Heart right ventricle (tissue), 16 donors: ENCODE measurements at regions of chr3 and their contacts with region 1.

Region 1: GRCh38 chr3:23999012-23999641 is 54.0 kb downstream of the NR1D2 start:
- DNase-seq: peak; percentile 53 to 66
- ATAC-seq: peak in 1 of 8 donors; percentile 28
- H3K4me3 ChIP-seq: no peak overlapping the region
- H3K27ac ChIP-seq: no peak overlapping the region
- H3K4me1 ChIP-seq: peaks cover 0 to 18% (median 7%) of the 10 kb centered on the region in 9 donors
- H3K27me3 ChIP-seq: no peaks in the 10 kb centered on the region
- CTCF ChIP-seq: peak; percentile 74 to 95 (median 89)

Region 2: DNA sequence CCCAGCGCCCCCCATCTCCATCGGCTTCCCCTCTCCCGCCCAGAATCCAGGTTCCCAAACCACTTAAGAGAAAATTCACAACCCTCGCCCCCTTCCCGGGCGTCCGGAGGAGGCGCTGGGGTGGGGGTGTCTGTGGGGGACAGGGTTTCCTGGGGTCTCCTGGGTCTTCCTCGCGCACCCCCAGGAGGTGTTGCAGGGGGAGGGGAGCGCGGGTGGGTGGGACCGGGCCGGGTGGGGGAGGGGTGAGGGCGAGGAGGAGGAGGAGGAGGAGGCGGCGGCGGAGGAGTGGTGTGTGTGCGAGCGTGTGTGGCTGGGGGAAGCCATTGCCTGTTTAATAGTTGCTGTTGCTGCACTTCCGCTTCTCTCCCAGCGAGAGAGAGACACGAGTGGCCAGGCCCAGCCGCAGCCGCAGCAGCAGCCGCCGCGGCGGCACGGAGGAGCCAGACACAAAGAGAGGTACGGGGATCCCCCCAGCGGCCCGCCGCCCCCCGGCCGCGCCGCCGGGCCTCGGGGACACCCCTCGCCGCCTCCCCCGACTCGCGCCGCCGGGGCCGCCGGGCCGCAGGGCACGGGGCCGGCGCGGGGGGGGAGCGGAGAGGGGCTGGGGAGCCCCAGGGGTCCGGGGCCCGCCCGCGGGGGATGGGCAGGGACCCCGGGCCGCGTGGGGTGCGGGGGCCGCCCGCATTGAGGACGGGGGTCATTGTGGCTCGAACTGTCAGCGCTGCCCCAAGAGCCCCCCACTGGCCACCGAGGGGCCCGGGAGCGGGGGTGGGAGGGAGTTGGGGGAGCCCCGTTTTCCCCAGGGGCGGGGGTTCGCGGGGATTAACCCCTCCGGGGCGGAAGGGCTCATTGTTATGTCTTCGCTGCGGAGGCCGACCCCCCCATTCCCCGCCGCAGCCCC is 193.2 kb before region 1 on chr3 and contains the start of gene UBE2E1:
- intact Hi-C with region 1: no loop called
- DNase-seq: peak; percentile 79 to 80
- ATAC-seq: peak; percentile 67 to 84 (median 80)
- H3K4me3 ChIP-seq: peak within 1 kb of the TSS; percentile 85 to 99 (median 92)
- H3K27ac ChIP-seq: peak within 1 kb of the TSS; percentile 60 to 95 (median 90)
- H3K4me1 ChIP-seq: peaks cover 5 to 35% (median 31%) of the 10 kb centered on the region in 9 donors
- H3K27me3 ChIP-seq: no peaks in the 10 kb centered on the region
- CTCF ChIP-seq: no peak
- total RNA-seq, gene UBE2E1: 59.7 to 88.8 (median 65.9) TPM

Region 3: GRCh38 chr3:23894254-23895061 is 104.7 kb before region 1 on chr3:
- intact Hi-C with region 1: loop called in 1 of 10 experiments (anchors 10 kb)
- DNase-seq: no peak
- ATAC-seq: peak in 1 of 8 donors; percentile 10
- H3K4me3 ChIP-seq: no peak overlapping the region
- H3K27ac ChIP-seq: no peak overlapping the region
- H3K4me1 ChIP-seq: peaks cover 0 to 6% (median 0%) of the 10 kb centered on the region in 9 donors
- H3K27me3 ChIP-seq: no peaks in the 10 kb centered on the region
- CTCF ChIP-seq: no peak

Region 4: DNA sequence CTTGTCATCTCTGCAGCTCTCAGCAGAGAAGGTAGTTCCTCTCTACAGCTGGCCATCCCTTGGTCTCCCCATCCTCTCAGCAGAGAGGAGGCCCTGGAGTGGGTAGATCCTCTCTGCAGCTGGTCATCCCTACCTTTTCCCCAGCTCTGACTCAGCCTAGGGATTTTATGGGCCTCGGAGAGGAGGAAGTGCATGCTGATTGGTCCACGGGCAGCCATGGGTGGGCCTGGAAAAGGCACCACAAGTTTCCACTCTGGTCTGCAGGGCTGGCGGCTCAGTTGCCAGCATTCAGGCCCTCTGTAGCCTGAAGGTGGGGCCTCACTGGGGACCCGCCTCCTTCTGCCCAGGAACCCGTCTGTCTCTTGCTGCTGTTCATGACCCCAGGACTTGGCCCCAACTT is 17.2 kb before region 1 on chr3:
- intact Hi-C with region 1: loop called in 1 of 10 experiments (anchors 1 kb)
- DNase-seq: no peak
- ATAC-seq: peak; percentile 31 to 70 (median 41)
- H3K4me3 ChIP-seq: no peak overlapping the region
- H3K27ac ChIP-seq: no peak overlapping the region
- H3K4me1 ChIP-seq: peaks cover 0 to 36% (median 18%) of the 10 kb centered on the region in 9 donors
- H3K27me3 ChIP-seq: no peaks in the 10 kb centered on the region
- CTCF ChIP-seq: no peak

Region 5: DNA sequence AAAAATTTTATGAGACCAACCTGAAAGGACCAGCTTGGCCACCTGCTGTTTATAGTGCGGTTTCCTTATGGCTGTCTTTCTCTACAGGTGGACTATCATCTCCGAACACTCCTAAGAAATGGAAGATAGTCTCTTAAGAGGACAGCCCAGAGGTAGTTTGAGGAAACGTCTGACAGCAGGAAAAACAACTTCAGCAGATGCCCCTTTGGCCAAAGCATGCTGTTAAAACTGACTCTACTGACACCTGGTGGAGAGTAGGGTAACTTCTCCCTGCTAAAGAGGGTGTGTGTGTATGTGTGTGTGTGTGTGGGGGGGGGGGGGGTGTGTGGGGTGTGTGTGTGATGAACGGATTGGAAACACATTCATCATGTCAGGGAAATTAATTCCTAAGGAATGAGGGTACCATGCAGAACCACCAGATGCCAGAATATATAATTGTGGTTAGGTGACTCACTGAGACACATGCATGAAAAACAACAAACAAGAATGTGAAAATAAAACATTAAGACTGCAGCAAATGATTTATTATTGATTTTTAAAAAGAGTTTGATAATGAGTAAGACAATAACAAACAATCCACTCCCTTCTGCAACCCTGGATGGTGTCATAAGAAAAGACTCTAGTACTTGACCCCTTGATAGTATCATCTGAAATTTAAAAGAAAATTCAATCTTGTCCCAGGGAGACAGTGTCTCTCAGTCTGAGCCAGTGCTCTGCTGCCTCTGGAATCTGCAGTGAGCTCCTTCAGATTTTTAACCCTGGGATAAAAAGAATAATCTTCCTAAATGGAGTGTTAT is 239.0 kb after region 1 on chr3:
- intact Hi-C with region 1: loop called (anchors 1 to 5 kb)
- DNase-seq: peak in 1 of 2 donors; percentile 67
- ATAC-seq: peak; percentile 68 to 82 (median 76)
- H3K4me3 ChIP-seq: no peak overlapping the region
- H3K27ac ChIP-seq: peak overlapping the region in 4 of 10 donors; percentile 1 to 28 (median 16)
- H3K4me1 ChIP-seq: peaks cover 0 to 32% (median 13%) of the 10 kb centered on the region in 9 donors
- H3K27me3 ChIP-seq: no peaks in the 10 kb centered on the region
- CTCF ChIP-seq: peak in 8 of 9 donors; percentile 33 to 66 (median 59)

Region 6: GRCh38 chr3:24589931-24590880 is 591.1 kb after region 1 on chr3:
- intact Hi-C with region 1: loop called in 1 of 10 experiments (anchors 5 kb)
- DNase-seq: no peak
- ATAC-seq: no peak
- H3K4me3 ChIP-seq: no peak overlapping the region
- H3K27ac ChIP-seq: no peak overlapping the region
- H3K4me1 ChIP-seq: peaks cover 0 to 17% (median 8%) of the 10 kb centered on the region in 9 donors
- H3K27me3 ChIP-seq: no peaks in the 10 kb centered on the region
- CTCF ChIP-seq: no peak

Region 7: GRCh38 chr3:24680214-24680967 is 681.3 kb after region 1 on chr3:
- intact Hi-C with region 1: loop called (anchors 2 to 10 kb)
- DNase-seq: peak; percentile 47 to 68
- ATAC-seq: peak in 6 of 8 donors; percentile 64 to 82 (median 76)
- H3K4me3 ChIP-seq: no peak overlapping the region
- H3K27ac ChIP-seq: no peak overlapping the region
- H3K4me1 ChIP-seq: peaks cover 0 to 4% (median 0%) of the 10 kb centered on the region in 9 donors
- H3K27me3 ChIP-seq: peaks cover 0 to 4% (median 0%) of the 10 kb centered on the region in 7 donors
- CTCF ChIP-seq: peak; percentile 55 to 90 (median 85)

Region 8: GRCh38 chr3:24686808-24687207 is 687.7 kb after region 1 on chr3:
- intact Hi-C with region 1: loop called (anchors 2 to 10 kb)
- DNase-seq: no peak
- ATAC-seq: no peak
- H3K4me3 ChIP-seq: no peak overlapping the region
- H3K27ac ChIP-seq: no peak overlapping the region
- H3K4me1 ChIP-seq: peaks cover 0 to 7% (median 0%) of the 10 kb centered on the region in 9 donors
- H3K27me3 ChIP-seq: no peaks in the 10 kb centered on the region
- CTCF ChIP-seq: no peak